CD8-positive, alpha-beta T cell (primary cell): ENCODE measurements at regions of chr5 and their contacts with region 1.

Region 1: DNA sequence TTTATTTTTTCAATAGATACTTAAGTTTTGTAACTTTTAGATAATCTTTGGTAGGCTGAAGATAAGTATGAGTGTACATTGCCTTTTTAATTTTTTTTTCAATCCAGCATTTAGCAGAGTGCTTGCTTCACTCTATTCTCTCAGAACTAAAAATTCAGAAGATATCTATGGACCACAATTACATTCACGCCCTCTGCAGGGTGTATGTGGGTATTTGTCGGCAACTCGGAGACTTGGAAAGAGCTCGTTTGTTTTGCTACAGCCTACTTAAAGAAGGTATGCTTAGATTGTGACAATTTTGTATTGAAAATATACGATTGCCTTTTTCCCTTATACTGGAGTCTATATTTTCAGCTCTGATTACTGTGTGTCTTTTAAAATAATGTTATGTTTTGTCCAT is 43.8 kb downstream of the ICE1 start:
- DNase-seq: no peak
- ATAC-seq: no peak
- H3K4me3 ChIP-seq: no peak overlapping the region
- H3K4me3 Mint-ChIP-seq: no peak overlapping the region
- H3K27ac ChIP-seq: no peak overlapping the region
- H3K27ac Mint-ChIP-seq: no peak overlapping the region
- H3K4me1 ChIP-seq: no peaks in the 10 kb centered on the region
- H3K4me1 Mint-ChIP-seq: no peaks in the 10 kb centered on the region
- H3K27me3 ChIP-seq: no peaks in the 10 kb centered on the region
- H3K27me3 Mint-ChIP-seq: no peaks in the 10 kb centered on the region
- CTCF ChIP-seq: no peak

Region 2: GRCh38 chr5:5432020-5432707 is 34.1 kb before region 1 on chr5:
- CTCF ChIA-PET with region 1: no interaction called
- POLR2A ChIA-PET with region 1: no interaction called
- intact Hi-C with region 1: loop called (anchors 5 kb)
- DNase-seq: no peak
- ATAC-seq: no peak
- H3K4me3 ChIP-seq: no peak overlapping the region
- H3K4me3 Mint-ChIP-seq: no peak overlapping the region
- H3K27ac ChIP-seq: no peak overlapping the region
- H3K27ac Mint-ChIP-seq: no peak overlapping the region
- H3K4me1 ChIP-seq: peaks cover 10% of the 10 kb centered on the region
- H3K4me1 Mint-ChIP-seq: peaks cover 62% of the 10 kb centered on the region
- H3K27me3 ChIP-seq: no peaks in the 10 kb centered on the region
- H3K27me3 Mint-ChIP-seq: no peaks in the 10 kb centered on the region
- CTCF ChIP-seq: no peak

Region 3: GRCh38 chr5:5736007-5736406 is 269.8 kb after region 1 on chr5:
- CTCF ChIA-PET with region 1: no interaction called
- POLR2A ChIA-PET with region 1: no interaction called
- intact Hi-C with region 1: no loop called
- DNase-seq: no peak
- ATAC-seq: no peak
- H3K4me3 ChIP-seq: no peak overlapping the region
- H3K4me3 Mint-ChIP-seq: no peak overlapping the region
- H3K27ac ChIP-seq: no peak overlapping the region
- H3K27ac Mint-ChIP-seq: no peak overlapping the region
- H3K4me1 ChIP-seq: no peaks in the 10 kb centered on the region
- H3K4me1 Mint-ChIP-seq: no peaks in the 10 kb centered on the region
- H3K27me3 ChIP-seq: no peaks in the 10 kb centered on the region
- H3K27me3 Mint-ChIP-seq: peaks cover 7% of the 10 kb centered on the region
- CTCF ChIP-seq: no peak